WTC11 (cell line): ENCODE measurements at regions of chr19 and their contacts with region 1.

Region 1: GRCh38 chr19:46515879-46516350 is 20.2 kb upstream of the PNMA8B start:
- DNase-seq: no peak
- ATAC-seq: peak; percentile 39
- H3K4me3 Mint-ChIP-seq: no peak overlapping the region
- H3K27ac Mint-ChIP-seq: no peak overlapping the region
- H3K4me1 Mint-ChIP-seq: 0 out of 2 replicates have a peak, but pooled peaks cover 2% of the 10 kb centered on the region
- H3K27me3 Mint-ChIP-seq: no peaks in the 10 kb centered on the region
- CTCF ChIP-seq: no peak; the same call in 1 of the 2 replicates

Region 2: DNA sequence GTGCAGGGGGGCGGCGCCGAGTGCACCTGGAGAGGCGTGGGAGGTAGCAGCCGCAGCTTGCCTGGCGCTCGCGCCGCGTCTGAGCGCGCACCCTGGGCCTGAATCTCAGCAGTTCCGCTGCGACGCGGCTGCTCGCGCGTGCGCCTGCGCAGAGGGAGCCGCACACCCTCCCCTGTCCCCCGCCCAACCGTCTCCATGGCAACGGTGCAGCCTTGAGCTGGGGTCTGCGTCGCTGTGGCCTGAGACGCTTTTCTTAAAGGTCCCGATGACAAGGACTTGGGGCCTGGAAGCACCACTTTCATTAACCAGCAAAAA is 20.2 kb before region 1 on chr19 and contains the start of gene PNMA8B:
- CTCF ChIA-PET with region 1: interaction called, 15 read pairs
- POLR2A ChIA-PET with region 1: no interaction called
- DNase-seq: peak; percentile 97
- ATAC-seq: peak; percentile 73
- H3K4me3 Mint-ChIP-seq: peak within 1 kb of the TSS; percentile 72
- H3K27ac Mint-ChIP-seq: no peak within 1 kb of the TSS
- H3K4me1 Mint-ChIP-seq: peaks cover 26% of the 10 kb centered on the region
- H3K27me3 Mint-ChIP-seq: peaks cover 49% of the 10 kb centered on the region
- CTCF ChIP-seq: no peak
- total RNA-seq, gene PNMA8B: 2.8 to 4.0 TPM (median 3.6 TPM) in 3 replicates

Region 3: DNA sequence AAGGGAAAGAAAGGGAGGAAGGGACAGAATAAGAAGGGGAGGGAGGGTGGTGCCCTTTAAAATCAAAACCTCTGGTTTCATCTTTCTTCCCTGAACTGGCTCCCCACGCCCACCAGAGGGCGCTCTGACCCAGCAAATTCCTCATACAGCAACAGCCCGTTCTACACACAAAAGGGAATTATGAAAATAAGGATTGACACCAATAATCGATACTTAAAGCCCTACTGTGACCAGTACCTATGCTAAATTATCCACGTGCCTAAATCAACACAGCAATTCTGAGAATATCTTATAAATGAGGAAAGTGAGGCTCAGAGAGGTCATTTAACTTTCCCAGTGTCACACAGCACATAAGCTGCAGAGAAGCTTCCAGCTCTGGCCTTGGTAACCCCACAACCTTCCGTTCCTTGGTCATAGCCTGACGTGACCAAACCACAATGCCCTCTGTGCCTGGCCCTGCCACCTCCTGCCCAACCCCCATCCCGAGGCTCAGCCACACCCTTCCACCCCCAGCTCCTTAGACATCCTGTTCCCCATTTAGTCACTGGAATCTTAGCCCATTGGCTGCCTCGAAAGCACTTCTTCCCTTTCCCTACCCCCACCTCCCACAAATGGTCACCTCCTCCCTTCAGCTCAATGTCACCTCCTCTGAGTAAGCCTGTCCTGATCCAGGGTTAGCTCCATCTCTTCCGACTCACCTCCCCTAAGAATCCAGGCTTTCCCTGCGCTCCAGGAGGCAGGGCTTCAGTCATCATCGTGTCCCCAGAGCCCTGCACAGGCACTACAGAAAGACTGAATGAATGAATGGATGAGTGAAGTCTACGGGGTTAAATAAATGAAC is 13.9 kb after region 1 on chr19:
- CTCF ChIA-PET with region 1: interaction called, 36 read pairs
- POLR2A ChIA-PET with region 1: no interaction called
- DNase-seq: peak; percentile 81
- ATAC-seq: peak; percentile 48
- H3K4me3 Mint-ChIP-seq: peak overlapping the region; percentile 40
- H3K27ac Mint-ChIP-seq: peak overlapping the region; percentile 55; the same call in 1 of the 2 replicates
- H3K4me1 Mint-ChIP-seq: peaks cover 26% of the 10 kb centered on the region
- H3K27me3 Mint-ChIP-seq: peaks cover 3% of the 10 kb centered on the region; the same call in 1 of the 2 replicates
- CTCF ChIP-seq: peak; percentile 96

Region 4: GRCh38 chr19:46542428-46543230 is 26.7 kb after region 1 on chr19:
- CTCF ChIA-PET with region 1: interaction called, 33 read pairs
- POLR2A ChIA-PET with region 1: no interaction called
- DNase-seq: peak; percentile 93
- ATAC-seq: peak; percentile 80
- H3K4me3 Mint-ChIP-seq: no peak overlapping the region
- H3K27ac Mint-ChIP-seq: no peak overlapping the region
- H3K4me1 Mint-ChIP-seq: peaks cover 5% of the 10 kb centered on the region
- H3K27me3 Mint-ChIP-seq: peaks cover 3% of the 10 kb centered on the region; the same call in 1 of the 2 replicates
- CTCF ChIP-seq: peak; percentile 92